CD4-positive, alpha-beta T cell (primary cell): ENCODE measurements at regions of chr1 and their contacts with region 1.

Region 1: DNA sequence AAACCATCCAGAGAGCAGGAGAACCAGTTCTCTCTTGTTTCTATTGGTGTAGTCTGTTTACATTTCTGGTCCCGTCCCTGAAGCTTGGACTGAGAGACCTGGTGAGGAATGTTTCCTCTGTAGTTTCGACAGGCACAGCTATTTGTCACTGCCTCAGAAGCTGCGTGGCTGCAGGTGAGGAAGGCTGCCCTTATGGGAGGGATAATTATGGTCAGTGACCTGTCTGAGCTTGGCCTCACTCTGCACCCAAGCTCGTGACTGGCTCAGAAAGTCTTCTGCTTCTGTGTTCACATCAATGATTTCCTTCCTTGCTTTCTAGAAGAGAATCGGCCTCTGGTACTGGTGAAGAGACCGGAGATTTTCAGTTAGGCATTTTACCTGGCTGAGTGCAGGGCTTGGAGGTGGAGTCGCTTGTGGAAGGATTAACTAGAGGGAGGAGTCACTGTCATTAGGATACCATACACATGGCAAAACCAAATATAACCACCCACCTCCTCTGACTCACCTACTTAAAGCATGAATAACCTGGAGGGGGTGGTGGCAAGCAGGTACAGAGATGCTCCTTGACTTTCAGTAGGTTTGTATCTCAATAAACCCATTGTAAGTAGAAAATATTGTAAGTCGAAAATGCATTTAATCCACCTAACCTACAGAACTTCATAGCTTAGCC is 19.9 kb upstream of the WDR26 start:
- DNase-seq: no peak
- ATAC-seq: no peak
- H3K4me3 ChIP-seq: no peak overlapping the region
- H3K4me3 Mint-ChIP-seq: no peak overlapping the region
- H3K27ac ChIP-seq: no peak overlapping the region
- H3K27ac Mint-ChIP-seq: no peak overlapping the region
- H3K4me1 ChIP-seq: peaks cover 9% of the 10 kb centered on the region
- H3K4me1 Mint-ChIP-seq: peaks cover 16% of the 10 kb centered on the region
- H3K27me3 ChIP-seq: no peaks in the 10 kb centered on the region
- H3K27me3 Mint-ChIP-seq: no peaks in the 10 kb centered on the region
- CTCF ChIP-seq: no peak

Region 2: GRCh38 chr1:224113918-224114786 is 340.4 kb before region 1 on chr1 and contains the start of gene FBXO28:
- CTCF ChIA-PET with region 1: interaction called, 10 read pairs
- POLR2A ChIA-PET with region 1: interaction called, 4 read pairs
- intact Hi-C with region 1: loop called (anchors 1 kb)
- DNase-seq: peak; percentile 85 to 96 (median 92)
- ATAC-seq: peak; percentile 91
- H3K4me3 ChIP-seq: peak within 1 kb of the TSS; percentile 98
- H3K4me3 Mint-ChIP-seq: peak within 1 kb of the TSS; percentile 92
- H3K27ac ChIP-seq: peak within 1 kb of the TSS; percentile 91 to 98
- H3K27ac Mint-ChIP-seq: peak within 1 kb of the TSS; percentile 84
- H3K4me1 ChIP-seq: peaks cover 17% of the 10 kb centered on the region
- H3K4me1 Mint-ChIP-seq: peaks cover 42% of the 10 kb centered on the region
- H3K27me3 ChIP-seq: no peaks in the 10 kb centered on the region
- H3K27me3 Mint-ChIP-seq: peaks cover 6% of the 10 kb centered on the region
- CTCF ChIP-seq: no peak
- total RNA-seq, gene FBXO28: 32.5 to 37.1 TPM

Region 3: DNA sequence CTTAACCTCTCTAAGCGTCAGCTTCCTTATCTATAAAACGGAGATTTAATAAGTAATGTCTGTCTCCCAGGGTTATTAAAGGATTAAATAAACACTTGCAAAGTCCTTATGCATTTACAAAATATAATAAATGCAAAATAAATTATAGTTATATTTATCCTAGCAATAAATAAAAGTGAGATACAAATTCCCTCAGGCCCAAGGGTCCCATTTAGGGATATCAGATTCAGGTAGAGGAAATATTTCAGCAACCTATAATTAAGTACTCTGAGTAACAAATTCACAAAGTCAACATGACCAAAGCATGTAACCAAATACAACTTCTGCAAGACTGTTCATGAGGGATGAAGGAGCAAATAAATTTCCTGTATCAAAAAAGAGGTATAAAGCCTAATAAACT is 142.5 kb before region 1 on chr1:
- CTCF ChIA-PET with region 1: no interaction called
- POLR2A ChIA-PET with region 1: no interaction called
- intact Hi-C with region 1: loop called in 1 of 2 experiments (anchors 5 kb)
- DNase-seq: no peak
- ATAC-seq: no peak
- H3K4me3 ChIP-seq: no peak overlapping the region
- H3K4me3 Mint-ChIP-seq: no peak overlapping the region
- H3K27ac ChIP-seq: no peak overlapping the region
- H3K27ac Mint-ChIP-seq: no peak overlapping the region
- H3K4me1 ChIP-seq: no peaks in the 10 kb centered on the region
- H3K4me1 Mint-ChIP-seq: no peaks in the 10 kb centered on the region
- H3K27me3 ChIP-seq: no peaks in the 10 kb centered on the region
- H3K27me3 Mint-ChIP-seq: no peaks in the 10 kb centered on the region
- CTCF ChIP-seq: no peak

Region 4: DNA sequence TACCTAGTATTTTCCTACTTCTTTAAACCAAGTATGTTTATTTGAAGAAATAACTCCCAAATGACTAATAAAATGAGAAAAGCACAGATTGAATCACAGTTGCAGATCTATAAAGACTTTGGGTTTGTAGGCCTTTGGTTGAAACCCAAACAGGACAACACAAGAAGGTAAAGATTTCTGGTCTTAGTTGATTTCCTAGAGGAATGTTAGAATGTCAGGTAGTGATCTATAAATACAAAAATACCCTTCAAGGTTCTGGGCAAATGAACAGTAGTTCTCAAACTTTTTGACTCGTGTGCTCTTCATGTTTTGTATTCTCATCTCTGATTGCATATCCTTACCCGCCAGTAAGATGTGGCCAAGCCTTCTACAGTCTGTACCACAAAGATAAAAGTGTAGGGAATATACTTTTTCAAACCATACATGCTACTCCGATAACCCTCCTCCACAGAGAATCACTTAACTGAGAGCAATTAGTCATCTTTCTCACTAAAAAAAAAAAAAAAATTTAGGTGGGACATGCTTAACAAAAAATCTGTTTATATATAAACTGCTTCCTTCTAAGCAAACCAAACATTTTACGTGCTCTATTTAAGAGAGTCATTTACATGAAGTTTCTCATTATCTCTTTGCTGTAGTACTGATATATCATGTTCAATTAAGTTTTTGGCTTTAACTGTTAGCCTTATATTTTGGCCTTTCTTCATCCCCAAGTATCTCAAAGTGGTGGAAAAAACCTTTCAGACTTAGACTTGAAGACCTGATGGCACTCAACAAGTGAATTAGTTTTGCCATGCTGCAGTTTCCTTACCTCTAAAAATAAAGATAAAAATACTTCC is 61.9 kb before region 1 on chr1:
- CTCF ChIA-PET with region 1: interaction called, 3 read pairs
- POLR2A ChIA-PET with region 1: no interaction called
- intact Hi-C with region 1: loop called in 1 of 2 experiments (anchors 5 kb)
- DNase-seq: no peak
- ATAC-seq: peak; percentile 30
- H3K4me3 ChIP-seq: no peak overlapping the region
- H3K4me3 Mint-ChIP-seq: peak overlapping the region; percentile 20
- H3K27ac ChIP-seq: no peak overlapping the region
- H3K27ac Mint-ChIP-seq: peak overlapping the region; percentile 62
- H3K4me1 ChIP-seq: peaks cover 3% of the 10 kb centered on the region
- H3K4me1 Mint-ChIP-seq: peaks cover 49% of the 10 kb centered on the region
- H3K27me3 ChIP-seq: no peaks in the 10 kb centered on the region
- H3K27me3 Mint-ChIP-seq: no peaks in the 10 kb centered on the region
- CTCF ChIP-seq: no peak

Region 5: GRCh38 chr1:224407571-224408560 is 46.7 kb before region 1 on chr1:
- CTCF ChIA-PET with region 1: interaction called, 3 read pairs
- POLR2A ChIA-PET with region 1: no interaction called
- intact Hi-C with region 1: loop called in 1 of 2 experiments (anchors 10 kb)
- DNase-seq: no peak
- ATAC-seq: no peak
- H3K4me3 ChIP-seq: no peak overlapping the region
- H3K4me3 Mint-ChIP-seq: no peak overlapping the region
- H3K27ac ChIP-seq: no peak overlapping the region
- H3K27ac Mint-ChIP-seq: no peak overlapping the region
- H3K4me1 ChIP-seq: no peaks in the 10 kb centered on the region
- H3K4me1 Mint-ChIP-seq: peaks cover 51% of the 10 kb centered on the region
- H3K27me3 ChIP-seq: no peaks in the 10 kb centered on the region
- H3K27me3 Mint-ChIP-seq: no peaks in the 10 kb centered on the region
- CTCF ChIP-seq: no peak

Region 6: DNA sequence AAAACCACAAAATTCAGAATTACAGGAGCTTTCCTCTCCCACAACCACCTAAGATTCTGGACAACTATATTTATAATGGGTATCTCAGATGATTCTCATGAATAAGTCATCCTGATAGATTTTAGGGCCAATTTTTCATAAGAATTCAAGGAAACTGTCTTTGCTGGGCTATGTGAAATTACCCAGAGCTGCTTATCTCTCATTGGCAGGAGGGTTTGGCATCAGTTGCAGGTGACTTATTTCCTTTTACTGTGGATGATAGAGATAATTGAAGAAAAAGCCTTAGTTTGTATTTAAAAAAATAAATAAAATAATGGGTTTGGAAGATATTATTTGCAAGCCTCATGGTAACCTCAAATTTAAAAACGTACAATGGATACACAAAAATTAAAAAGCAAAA is 18.3 kb after region 1 on chr1:
- CTCF ChIA-PET with region 1: no interaction called
- POLR2A ChIA-PET with region 1: no interaction called
- intact Hi-C with region 1: no loop called
- DNase-seq: no peak
- ATAC-seq: no peak
- H3K4me3 ChIP-seq: no peak overlapping the region
- H3K4me3 Mint-ChIP-seq: no peak overlapping the region
- H3K27ac ChIP-seq: no peak overlapping the region
- H3K27ac Mint-ChIP-seq: no peak overlapping the region
- H3K4me1 ChIP-seq: no peaks in the 10 kb centered on the region
- H3K4me1 Mint-ChIP-seq: no peaks in the 10 kb centered on the region
- H3K27me3 ChIP-seq: no peaks in the 10 kb centered on the region
- H3K27me3 Mint-ChIP-seq: no peaks in the 10 kb centered on the region
- CTCF ChIP-seq: no peak